Prostate gland (tissue), 2 donors: ENCODE measurements at regions of chr6 and their contacts with region 1.

Region 1: DNA sequence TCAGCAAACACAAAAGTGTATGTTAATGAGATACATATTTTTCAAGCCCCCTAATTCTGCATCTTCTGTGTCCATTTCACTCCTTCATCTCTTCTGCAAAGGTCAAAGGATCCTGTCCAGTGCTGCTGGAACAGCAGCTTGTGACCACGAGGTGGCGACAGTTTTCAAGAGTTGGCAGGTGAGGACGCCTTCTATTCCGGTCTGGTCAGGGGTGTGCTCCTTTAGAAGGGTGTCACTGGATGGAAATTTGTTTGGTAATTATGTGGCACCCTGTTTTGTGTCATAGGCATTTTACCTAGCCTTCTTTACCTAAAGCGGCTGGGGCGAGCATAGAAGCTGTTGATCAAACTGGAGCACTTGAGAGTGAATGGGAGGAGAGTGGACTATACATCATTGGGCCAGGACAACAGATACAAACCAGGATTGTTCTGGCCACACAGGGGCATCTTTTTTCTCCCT is 32.9 kb upstream of the ERVFRD-1 start:
- DNase-seq: peak; percentile 78
- H3K4me3 ChIP-seq: no peak overlapping the region
- H3K27ac ChIP-seq: no peak overlapping the region
- H3K4me1 ChIP-seq: no peaks in the 10 kb centered on the region
- H3K27me3 ChIP-seq: no peaks in the 10 kb centered on the region
- CTCF ChIP-seq: peak; percentile 78 to 92 (median 86)
- POLR2A ChIP-seq: no peak

Region 2: DNA sequence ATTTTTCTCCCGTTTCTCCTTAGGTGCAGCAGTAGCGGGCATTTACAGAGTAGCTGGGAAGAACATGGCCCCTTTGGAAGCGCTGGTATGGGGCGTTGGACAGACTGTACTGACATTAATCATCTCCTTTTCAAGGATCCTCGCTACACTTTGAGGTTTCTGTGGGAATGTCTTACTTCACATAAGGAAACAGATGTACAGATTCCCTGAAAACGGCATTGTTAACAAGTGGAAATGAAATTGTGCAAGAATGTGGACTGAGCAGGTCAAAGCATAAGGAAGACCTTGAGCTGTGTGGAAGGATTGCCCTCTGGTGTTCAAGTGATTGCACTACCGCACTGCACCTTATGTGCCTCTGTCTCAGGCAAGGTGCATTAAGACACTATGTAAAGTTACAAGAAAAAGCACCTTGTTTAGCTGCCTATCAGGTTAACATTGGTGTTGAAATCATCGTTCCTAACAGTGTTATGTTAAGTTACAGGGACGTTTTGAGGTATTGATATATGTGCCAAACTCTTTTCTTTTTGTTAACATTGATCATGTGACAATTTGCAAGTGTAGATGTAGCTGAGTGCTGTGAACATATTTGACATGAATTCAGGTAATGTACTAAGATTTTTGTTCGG is 431.1 kb after region 1 on chr6:
- intact Hi-C with region 1: loop called (anchors 10 kb)
- DNase-seq: peak; percentile 51
- H3K4me3 ChIP-seq: no peak overlapping the region
- H3K27ac ChIP-seq: no peak overlapping the region
- H3K4me1 ChIP-seq: no peaks in the 10 kb centered on the region
- H3K27me3 ChIP-seq: no peaks in the 10 kb centered on the region
- CTCF ChIP-seq: peak; percentile 30 to 90 (median 72)
- POLR2A ChIP-seq: no peak